ENCODE measurements at regions of chr21 and their contacts with region 1.

Region 1: GRCh38 chr21:36350282-36350910 is 30.4 kb downstream of the MORC3 start:
- DNase-seq: peak; percentile 41
- H3K4me3 ChIP-seq: no peak overlapping the region
- H3K27me3 ChIP-seq: no peaks in the 10 kb centered on the region
- CTCF ChIP-seq: no peak

Region 2: GRCh38 chr21:36104317-36105300 is 245.8 kb before region 1 on chr21:
- CTCF ChIA-PET with region 1: no interaction called
- POLR2A ChIA-PET with region 1: no interaction called
- DNase-seq: no peak
- H3K4me3 ChIP-seq: no peak overlapping the region
- H3K27me3 ChIP-seq: 0 out of 2 replicates have a peak, but pooled peaks cover 3% of the 10 kb centered on the region
- CTCF ChIP-seq: peak; percentile 52

Region 3: GRCh38 chr21:36337099-36337509 is 13.3 kb before region 1 on chr21:
- CTCF ChIA-PET with region 1: interaction called, 3 read pairs
- POLR2A ChIA-PET with region 1: interaction called, 13 read pairs
- DNase-seq: no peak
- H3K4me3 ChIP-seq: no peak overlapping the region
- H3K27me3 ChIP-seq: no peaks in the 10 kb centered on the region
- CTCF ChIP-seq: no peak

Measured in BJ (cell line).